Heart left ventricle (tissue), 16 donors: ENCODE measurements at regions of chrX and their contacts with region 1.

Region 1: GRCh38 chrX:129606918-129607317 is 47.8 kb downstream of the APLN start:
- DNase-seq: peak in 4 of 5 donors; percentile 35 to 47 (median 40)
- ATAC-seq: peak in 3 of 4 donors; percentile 48 to 72 (median 64)
- H3K4me3 ChIP-seq: no peak overlapping the region
- H3K27ac ChIP-seq: peak overlapping the region in 1 of 12 donors; percentile 19
- H3K4me1 ChIP-seq: peaks cover 0 to 18% (median 5%) of the 10 kb centered on the region in 12 donors
- H3K27me3 ChIP-seq: no peaks in the 10 kb centered on the region
- CTCF ChIP-seq: peak; percentile 52 to 78 (median 65)
- POLR2A ChIP-seq: no peak

Region 2: GRCh38 chrX:129726307-129727111 is 119.6 kb after region 1 on chrX:
- intact Hi-C with region 1: loop called in 8 of 10 experiments (anchors 1 to 10 kb)
- DNase-seq: peak; percentile 48 to 68 (median 65)
- ATAC-seq: peak in 3 of 4 donors; percentile 82 to 90 (median 87)
- H3K4me3 ChIP-seq: no peak overlapping the region
- H3K27ac ChIP-seq: no peak overlapping the region
- H3K4me1 ChIP-seq: peaks cover 0 to 2% (median 0%) of the 10 kb centered on the region in 12 donors
- H3K27me3 ChIP-seq: peaks cover 0 to 4% (median 0%) of the 10 kb centered on the region in 9 donors
- CTCF ChIP-seq: peak; percentile 46 to 80 (median 67)
- POLR2A ChIP-seq: no peak

Region 3: DNA sequence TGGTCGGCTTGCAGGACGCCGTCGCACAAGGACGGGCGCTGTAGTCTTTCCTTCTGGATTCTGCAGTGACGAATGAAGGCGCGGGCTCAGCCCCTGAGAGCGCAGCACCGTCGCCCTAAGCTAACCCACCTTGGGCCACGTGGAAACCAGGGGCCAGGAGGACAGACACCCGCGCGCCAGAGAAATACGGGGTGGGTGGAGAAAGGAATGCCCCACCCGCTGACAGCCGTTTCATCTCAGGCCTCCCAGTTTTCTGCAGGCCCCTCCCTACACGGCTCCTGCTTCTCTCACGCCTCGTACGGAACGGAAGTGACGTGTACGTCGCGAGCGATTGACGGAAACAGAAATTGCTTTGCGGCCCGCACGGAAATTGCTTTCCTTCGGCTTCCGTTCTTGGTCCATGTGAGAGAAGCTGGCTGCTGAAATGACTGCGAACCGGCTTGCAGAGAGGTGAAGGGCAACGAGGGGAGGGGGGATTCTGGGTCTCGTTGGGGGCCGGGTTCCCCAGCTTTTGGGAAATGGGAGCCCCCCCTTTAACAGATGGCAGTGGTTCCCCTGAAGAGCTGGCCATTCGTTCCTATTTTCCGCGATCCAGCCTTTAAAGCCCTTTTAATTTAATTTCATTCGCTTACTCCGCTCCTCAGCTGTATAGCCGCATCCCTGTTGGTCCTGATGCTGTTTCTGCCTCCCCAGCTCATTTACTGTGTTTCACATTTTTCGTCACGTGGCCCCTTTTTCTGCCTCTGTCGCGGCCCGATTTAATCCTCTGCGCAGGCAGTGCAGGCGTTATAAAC is 299.1 kb after region 1 on chrX and contains the start of gene UTP14A:
- intact Hi-C with region 1: loop called in 7 of 10 experiments (anchors 10 kb)
- DNase-seq: peak; percentile 88 to 93 (median 90)
- ATAC-seq: peak; percentile 92 to 100 (median 99)
- H3K4me3 ChIP-seq: peak within 1 kb of the TSS; percentile 44 to 78 (median 67)
- H3K27ac ChIP-seq: peak within 1 kb of the TSS; percentile 24 to 85 (median 74)
- H3K4me1 ChIP-seq: peaks cover 0 to 8% (median 2%) of the 10 kb centered on the region in 12 donors
- H3K27me3 ChIP-seq: no peaks in the 10 kb centered on the region
- CTCF ChIP-seq: no peak
- POLR2A ChIP-seq: peak in 1 of 2 donors; percentile 26
- total RNA-seq, gene UTP14A: 7.3 to 10.6 (median 9.0) TPM

Region 4: GRCh38 chrX:129931411-129932015 is 324.6 kb after region 1 on chrX:
- intact Hi-C with region 1: loop called in 2 of 10 experiments (anchors 10 kb)
- DNase-seq: peak; percentile 93 to 95 (median 95)
- ATAC-seq: peak; percentile 95 to 97 (median 95)
- H3K4me3 ChIP-seq: peak overlapping the region; percentile 37 to 81 (median 62)
- H3K27ac ChIP-seq: peak overlapping the region; percentile 87 to 99 (median 92)
- H3K4me1 ChIP-seq: peaks cover 0 to 5% (median 0%) of the 10 kb centered on the region in 12 donors
- H3K27me3 ChIP-seq: no peaks in the 10 kb centered on the region
- CTCF ChIP-seq: no peak
- POLR2A ChIP-seq: no peak

Region 5: GRCh38 chrX:130055103-130055502 is 448.2 kb after region 1 on chrX:
- intact Hi-C with region 1: loop called in 9 of 10 experiments (anchors 1 to 10 kb)
- DNase-seq: peak in 1 of 5 donors; percentile 37
- ATAC-seq: peak in 3 of 4 donors; percentile 24 to 35 (median 32)
- H3K4me3 ChIP-seq: no peak overlapping the region
- H3K27ac ChIP-seq: no peak overlapping the region
- H3K4me1 ChIP-seq: peaks cover 0 to 6% (median 0%) of the 10 kb centered on the region in 12 donors
- H3K27me3 ChIP-seq: no peaks in the 10 kb centered on the region
- CTCF ChIP-seq: no peak
- POLR2A ChIP-seq: no peak

Region 6: DNA sequence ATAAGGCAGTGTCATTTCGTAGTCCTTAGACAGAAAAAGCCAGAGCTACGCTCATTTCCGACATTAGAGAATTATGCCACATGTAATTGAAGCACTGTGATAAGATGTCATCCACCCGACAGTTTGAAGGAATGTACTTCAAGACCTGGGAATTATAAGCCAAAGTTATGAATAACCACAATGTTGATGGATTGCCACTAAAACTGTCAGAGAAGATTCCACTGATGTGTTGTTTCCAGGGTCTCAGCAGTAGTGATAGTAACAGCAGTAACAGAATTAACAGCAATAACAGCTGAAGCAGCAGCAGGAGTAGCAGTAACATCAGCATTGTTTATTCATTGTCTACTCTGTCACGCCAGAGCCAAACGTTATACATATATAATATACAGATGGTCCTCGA is 589.5 kb after region 1 on chrX:
- intact Hi-C with region 1: loop called in 4 of 10 experiments (anchors 10 kb)
- DNase-seq: no peak
- ATAC-seq: no peak
- H3K4me3 ChIP-seq: no peak overlapping the region
- H3K27ac ChIP-seq: no peak overlapping the region
- H3K4me1 ChIP-seq: no peaks in the 10 kb centered on the region
- H3K27me3 ChIP-seq: peaks cover 0 to 7% (median 0%) of the 10 kb centered on the region in 9 donors
- CTCF ChIP-seq: no peak
- POLR2A ChIP-seq: no peak